RWPE1 (cell line): ENCODE measurements at regions of chr1 and their contacts with region 1.

Region 1: DNA sequence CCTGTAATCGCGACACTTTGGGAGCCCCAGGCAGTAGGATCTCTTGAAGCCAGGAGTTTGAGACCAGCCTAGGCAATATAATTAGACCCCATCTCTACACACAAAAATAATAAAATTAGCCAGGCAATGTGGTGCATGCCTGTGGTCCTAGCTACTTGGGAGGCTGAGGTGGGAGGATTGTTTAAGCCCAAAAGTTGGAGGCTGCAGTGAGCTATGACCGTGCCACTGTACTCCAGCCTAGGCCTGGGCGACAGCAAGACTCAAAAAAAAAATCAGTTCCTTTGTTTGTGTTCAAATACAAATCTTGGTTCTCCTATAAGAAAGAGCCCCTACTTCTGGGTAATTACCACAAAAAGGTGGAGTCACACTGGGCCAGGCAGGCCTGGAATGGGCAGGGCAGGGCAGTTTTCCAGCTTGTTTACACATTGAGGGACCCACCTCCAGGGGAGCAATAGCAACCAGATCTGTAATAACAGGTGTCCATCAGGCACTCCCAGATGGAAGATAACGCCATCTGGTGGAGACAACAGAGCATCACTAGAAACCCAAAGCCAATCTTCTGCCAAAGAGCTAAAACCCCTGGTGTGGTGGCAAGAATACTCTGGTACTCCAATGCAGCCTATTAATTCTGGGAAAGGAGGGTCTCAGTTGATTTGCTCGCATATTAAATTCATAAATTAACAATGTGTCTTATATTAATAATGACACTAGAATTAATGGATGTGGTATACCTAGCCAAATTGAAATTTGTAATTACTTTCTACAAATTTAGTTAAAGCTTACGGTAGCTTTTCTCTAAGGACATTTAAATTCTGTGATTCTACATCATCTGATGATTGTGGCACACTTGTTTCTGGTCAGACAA is 13.2 kb downstream of the PPP1R15B start:
- DNase-seq: peak; percentile 98
- H3K27ac ChIP-seq: peak overlapping the region; percentile 61
- CTCF ChIP-seq: peak; percentile 86

Region 2: DNA sequence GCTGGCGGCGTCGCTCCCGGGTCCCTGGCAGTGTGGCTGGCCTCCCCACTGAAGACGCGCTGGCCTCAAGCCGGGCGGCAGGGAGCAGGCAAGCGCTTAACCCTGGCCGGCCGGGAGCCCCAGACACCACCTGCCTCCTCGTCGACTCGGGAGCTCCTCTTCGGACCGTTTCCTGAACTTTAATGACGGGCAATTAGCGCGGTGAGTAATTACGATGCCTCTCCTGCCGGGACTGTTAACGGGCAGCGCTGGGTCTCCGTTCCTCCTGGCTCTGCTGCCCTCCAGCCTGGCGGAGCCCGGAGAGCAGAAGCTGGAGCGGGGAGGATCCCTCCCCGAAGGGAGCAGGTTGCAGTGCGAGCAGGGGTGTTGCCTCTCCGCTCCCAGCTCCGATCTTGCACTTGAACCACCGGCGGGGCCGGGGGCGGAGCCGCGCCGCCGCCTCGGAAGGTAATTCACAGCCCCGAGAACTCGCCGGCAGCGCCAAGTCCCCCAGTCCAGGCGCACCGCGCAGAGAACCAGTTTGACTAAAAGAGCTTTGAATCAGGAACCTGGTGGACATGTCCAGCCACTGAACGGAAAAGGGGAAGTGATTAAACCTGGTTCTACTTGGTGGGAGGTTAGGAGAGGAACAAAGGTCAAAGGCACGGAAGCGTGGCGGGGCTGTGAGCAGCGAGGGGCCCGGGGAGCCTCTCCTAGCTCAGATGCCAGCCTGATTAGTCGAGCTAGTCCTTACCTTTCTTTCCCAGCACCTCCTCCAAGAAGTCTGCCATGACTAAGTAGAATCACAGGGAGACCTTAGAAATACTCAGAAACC is 20.4 kb before region 1 on chr1:
- CTCF ChIA-PET with region 1: interaction called, 40 read pairs
- POLR2A ChIA-PET with region 1: interaction called, 6 read pairs
- DNase-seq: peak; percentile 56
- H3K27ac ChIP-seq: no peak overlapping the region
- CTCF ChIP-seq: no peak

Region 3: DNA sequence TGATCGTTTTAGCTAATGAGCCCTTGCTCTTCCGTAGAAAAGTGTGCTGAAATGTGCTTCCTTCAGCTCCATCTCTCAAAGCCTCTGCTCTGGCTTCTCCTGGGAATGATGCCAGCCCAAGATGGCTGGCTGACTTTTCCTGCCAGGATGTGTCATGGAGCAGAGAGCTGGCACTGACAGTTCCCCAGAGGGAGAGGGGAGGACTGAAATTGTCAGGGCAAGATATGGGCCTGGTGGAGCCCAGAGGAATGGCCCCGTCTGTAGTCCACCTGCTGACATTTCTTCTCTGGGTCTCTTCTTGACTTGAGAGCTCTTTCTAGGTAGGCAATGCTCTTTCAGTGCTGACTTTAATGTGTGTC is 13.5 kb before region 1 on chr1:
- CTCF ChIA-PET with region 1: interaction called, 40 read pairs
- POLR2A ChIA-PET with region 1: interaction called, 6 read pairs
- DNase-seq: peak; percentile 51
- H3K27ac ChIP-seq: peak overlapping the region; percentile 59
- CTCF ChIP-seq: no peak

Region 4: GRCh38 chr1:204411451-204412204 is 13.2 kb after region 1 on chr1 and contains the start of gene PPP1R15B:
- CTCF ChIA-PET with region 1: interaction called, 16 read pairs
- POLR2A ChIA-PET with region 1: interaction called, 3 read pairs
- DNase-seq: peak; percentile 100
- H3K27ac ChIP-seq: peak within 1 kb of the TSS; percentile 94
- CTCF ChIP-seq: no peak

Region 5: GRCh38 chr1:204494281-204495077 is 96.0 kb after region 1 on chr1 and contains the start of gene PIK3C2B:
- CTCF ChIA-PET with region 1: interaction called, 17 read pairs
- POLR2A ChIA-PET with region 1: no interaction called
- DNase-seq: peak; percentile 97
- H3K27ac ChIP-seq: peak within 1 kb of the TSS; percentile 94
- CTCF ChIP-seq: peak; percentile 58